Naive thymus-derived CD8-positive, alpha-beta T cell (primary cell): ENCODE measurements at regions of chr19 and their contacts with region 1.

Region 1: DNA sequence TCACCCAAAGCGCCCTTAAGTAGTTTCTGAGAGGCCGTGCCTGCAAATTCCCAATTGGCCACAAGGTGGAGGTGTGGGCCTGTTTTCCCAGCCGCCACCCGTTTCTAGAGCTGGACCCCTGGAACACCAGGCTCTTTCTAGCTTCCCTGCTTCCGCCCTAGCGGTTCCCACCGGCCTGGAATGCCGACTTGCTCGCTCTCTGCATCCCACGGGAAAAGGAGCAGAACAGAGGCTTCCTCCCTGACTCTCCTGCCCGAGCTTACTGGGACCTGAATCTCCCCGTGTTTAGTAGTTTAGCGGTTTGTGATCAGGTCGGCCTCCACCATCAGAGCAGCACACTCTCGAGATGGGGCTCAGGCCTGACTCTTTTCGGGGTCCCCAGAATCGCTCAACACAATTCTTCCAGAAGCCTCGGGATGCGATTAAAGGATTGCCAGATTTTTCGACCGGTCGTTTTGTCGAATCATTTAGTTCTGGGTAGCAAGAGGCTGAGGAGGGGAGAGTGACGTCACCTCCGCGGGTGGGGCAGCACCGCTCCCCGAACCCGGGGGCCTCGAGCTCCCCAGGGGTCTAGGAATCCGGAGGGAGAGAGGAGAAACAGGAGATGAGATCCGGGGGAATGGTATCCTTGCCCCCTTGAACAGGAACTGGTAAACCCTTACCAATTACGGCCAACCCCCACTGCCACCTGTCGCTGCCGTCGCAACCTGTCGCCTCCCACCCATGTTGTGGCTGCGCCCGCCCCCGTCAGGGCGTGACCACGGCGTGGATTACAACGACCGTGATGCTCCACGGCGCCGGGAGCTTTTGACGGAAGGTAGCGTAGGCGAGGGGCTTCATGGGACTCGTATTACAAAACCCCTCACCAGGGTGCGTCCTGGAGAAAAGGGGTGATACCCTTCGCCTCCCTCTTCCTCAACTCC is 8.0 kb downstream of the NAPSA start:
- DNase-seq: peak; percentile 71 to 94 (median 88)
- ATAC-seq: peak; percentile 87
- H3K4me3 Mint-ChIP-seq: peak overlapping the region; percentile 91 to 96 (median 91)
- H3K27ac Mint-ChIP-seq: peak overlapping the region; percentile 92 to 99 (median 98)
- H3K4me1 Mint-ChIP-seq: peaks cover 27 to 51% (median 46%) of the 10 kb centered on the region in 4 donors
- H3K27me3 Mint-ChIP-seq: peaks cover 0 to 2% (median 0%) of the 10 kb centered on the region in 5 donors

Region 2: DNA sequence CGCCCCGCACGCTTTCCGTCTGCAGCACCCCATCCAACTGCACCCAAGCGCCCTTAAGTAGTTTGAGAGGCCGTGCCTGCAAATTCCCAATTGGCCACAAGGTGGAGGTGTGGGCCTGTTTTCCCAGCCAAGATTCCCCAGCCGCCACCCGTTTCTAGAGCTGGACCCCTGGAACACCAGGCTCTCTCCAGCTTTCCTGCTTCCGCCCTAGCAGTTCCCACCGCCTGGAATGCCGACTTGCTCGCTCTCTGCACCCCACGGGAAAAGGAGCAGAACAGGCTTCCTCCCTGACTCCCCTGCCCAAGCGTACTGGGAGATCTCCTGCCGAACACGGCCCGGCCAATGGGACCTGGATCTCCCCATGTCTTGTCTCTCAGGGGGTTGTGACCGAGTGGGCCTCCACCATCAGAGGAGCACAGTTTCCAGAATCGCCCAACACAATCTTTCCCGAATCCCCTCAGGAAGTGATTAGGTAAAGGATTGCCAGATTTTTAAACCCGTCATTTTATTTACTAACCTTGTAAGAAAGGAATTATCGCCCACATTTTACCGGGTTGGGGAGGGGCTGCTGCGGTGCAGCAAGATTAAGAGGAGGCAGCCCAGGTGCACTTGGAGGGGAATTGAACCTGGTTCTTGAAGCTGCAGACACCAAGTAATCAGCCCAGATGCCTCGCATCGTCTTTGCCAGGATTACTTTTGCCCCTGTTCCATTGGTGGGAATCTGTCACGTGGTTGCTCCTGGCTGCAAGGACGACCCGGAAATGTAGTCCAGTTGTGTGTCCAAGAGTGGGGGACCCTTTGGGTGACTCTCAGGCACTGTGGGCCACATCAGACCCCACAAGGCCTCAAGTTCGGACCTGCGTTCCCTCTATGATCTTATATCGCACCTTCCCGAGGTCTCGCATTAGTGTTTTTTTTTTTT is 11.5 kb after region 1 on chr19:
- POLR2A ChIA-PET with region 1: interaction called, 43 read pairs
- DNase-seq: peak; percentile 62 to 89 (median 79)
- ATAC-seq: peak; percentile 71 to 82
- H3K4me3 Mint-ChIP-seq: peak overlapping the region; percentile 87 to 98 (median 94)
- H3K27ac Mint-ChIP-seq: peak overlapping the region; percentile 75 to 97 (median 93)
- H3K4me1 Mint-ChIP-seq: peaks cover 17 to 41% (median 38%) of the 10 kb centered on the region in 4 donors
- H3K27me3 Mint-ChIP-seq: peaks cover 0 to 2% (median 0%) of the 10 kb centered on the region in 5 donors

Region 3: GRCh38 chr19:50376166-50377050 is 19.0 kb after region 1 on chr19 and contains the start of gene NR1H2:
- POLR2A ChIA-PET with region 1: interaction called, 39 read pairs
- DNase-seq: peak; percentile 91 to 97 (median 95)
- ATAC-seq: peak; percentile 84 to 86
- H3K4me3 Mint-ChIP-seq: peak within 1 kb of the TSS; percentile 92 to 100 (median 98)
- H3K27ac Mint-ChIP-seq: peak within 1 kb of the TSS; percentile 98 to 100 (median 100)
- H3K4me1 Mint-ChIP-seq: peaks cover 19 to 45% (median 30%) of the 10 kb centered on the region in 4 donors
- H3K27me3 Mint-ChIP-seq: peaks cover 0 to 2% (median 0%) of the 10 kb centered on the region in 5 donors
- polyA plus RNA-seq, gene NR1H2: 69.6 to 100 (median 86.7) TPM

Region 4: DNA sequence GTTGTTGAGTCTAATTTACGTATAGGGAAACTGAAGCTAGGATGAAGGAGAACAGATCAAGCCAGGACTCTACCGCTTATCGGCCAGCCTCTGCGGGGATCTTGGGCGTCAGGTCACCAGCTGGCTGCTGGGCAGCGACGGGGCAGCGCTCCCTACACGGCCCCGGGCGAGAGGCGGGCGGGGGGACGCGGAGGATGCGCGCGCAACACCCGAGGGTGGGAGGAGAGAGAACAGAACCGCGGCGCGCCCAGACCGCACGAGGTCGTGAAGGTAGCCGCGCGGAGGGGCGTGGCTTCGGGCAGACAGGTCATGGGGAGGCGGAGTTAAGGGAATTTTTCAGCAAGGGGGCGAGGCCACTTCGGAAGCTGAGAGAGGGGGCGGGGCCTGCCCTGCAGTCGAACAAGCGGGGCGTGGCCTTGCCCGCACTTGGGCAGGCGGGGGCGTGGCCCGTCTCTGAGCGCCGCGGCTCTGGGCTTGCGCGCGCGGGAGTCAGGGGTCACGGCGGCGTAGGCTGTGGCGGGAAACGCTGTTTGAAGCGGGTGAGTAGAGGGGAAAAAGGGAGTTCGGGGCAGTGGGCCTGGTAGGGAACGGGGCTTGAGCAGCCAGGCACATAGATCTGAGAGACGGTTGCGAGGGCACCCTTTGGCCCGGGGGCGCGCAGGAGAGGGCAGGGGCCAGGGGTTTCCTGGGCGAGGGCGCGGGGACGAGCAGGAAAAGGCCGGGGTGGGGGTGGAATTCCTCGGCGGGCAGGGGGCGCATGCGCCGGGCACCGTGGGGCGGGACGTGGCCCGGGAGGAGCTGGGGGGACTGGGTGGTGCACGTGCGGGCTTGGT is 26.6 kb after region 1 on chr19 and contains the start of gene POLD1:
- POLR2A ChIA-PET with region 1: interaction called, 21 read pairs
- DNase-seq: peak; percentile 97 to 99 (median 99)
- ATAC-seq: peak; percentile 84 to 87
- H3K4me3 Mint-ChIP-seq: peak within 1 kb of the TSS; percentile 92 to 99 (median 96)
- H3K27ac Mint-ChIP-seq: peak within 1 kb of the TSS; percentile 88 to 98 (median 94)
- H3K4me1 Mint-ChIP-seq: peaks cover 35 to 52% (median 39%) of the 10 kb centered on the region in 4 donors
- H3K27me3 Mint-ChIP-seq: peaks cover 0 to 5% (median 0%) of the 10 kb centered on the region in 5 donors
- polyA plus RNA-seq, gene POLD1: 26.0 to 34.4 (median 33.8) TPM

Region 5: GRCh38 chr19:50449236-50449899 is 91.9 kb after region 1 on chr19:
- POLR2A ChIA-PET with region 1: no interaction called
- DNase-seq: no peak
- ATAC-seq: no peak
- H3K4me3 Mint-ChIP-seq: no peak overlapping the region
- H3K27ac Mint-ChIP-seq: no peak overlapping the region
- H3K4me1 Mint-ChIP-seq: peaks cover 0 to 3% (median 0%) of the 10 kb centered on the region in 4 donors
- H3K27me3 Mint-ChIP-seq: peaks cover 2 to 35% (median 12%) of the 10 kb centered on the region in 5 donors

Region 6: DNA sequence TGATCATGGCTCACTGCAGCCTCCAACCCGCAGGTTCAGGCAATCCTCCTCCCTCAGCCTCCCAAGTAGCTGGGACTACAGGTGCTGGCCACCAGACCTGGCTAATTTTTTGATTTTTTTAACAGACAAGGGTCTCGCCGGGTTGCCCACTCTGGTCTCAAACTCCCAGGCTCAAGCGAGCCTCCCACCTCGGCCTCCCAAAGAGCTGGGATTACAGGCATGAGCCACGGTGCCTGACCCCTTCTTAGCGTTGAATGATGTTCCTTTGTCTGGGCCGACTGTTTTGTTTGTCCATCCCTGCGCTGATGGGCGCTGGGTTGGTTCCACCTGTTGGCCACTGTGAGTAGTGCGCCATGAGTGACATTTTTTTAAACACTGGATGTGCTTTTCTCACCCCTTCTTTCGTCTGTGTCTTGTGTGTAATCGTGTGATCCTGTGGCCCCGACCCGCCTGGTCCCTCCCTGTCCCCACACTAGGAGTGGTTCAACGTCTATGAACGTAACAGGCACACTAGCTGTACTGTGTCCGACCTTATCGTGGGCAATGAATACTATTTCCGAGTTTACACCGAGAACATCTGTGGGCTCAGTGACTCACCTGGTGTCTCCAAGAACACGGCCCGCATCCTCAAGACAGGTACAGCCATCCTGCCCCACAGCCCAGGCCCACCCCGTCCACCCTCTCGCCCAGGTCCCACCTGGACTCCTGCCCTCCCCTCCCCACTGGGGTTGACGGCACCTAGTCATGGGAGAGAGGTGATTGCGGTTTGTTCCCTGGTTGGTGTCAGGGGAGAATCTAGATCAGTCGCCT is 103.8 kb after region 1 on chr19:
- POLR2A ChIA-PET with region 1: interaction called, 15 read pairs
- DNase-seq: peak; percentile 26 to 74 (median 50)
- ATAC-seq: peak; percentile 74 to 95
- H3K4me3 Mint-ChIP-seq: peak overlapping the region in 1 of 10 donors; percentile 16
- H3K27ac Mint-ChIP-seq: peak overlapping the region in 1 of 10 donors; percentile 1
- H3K4me1 Mint-ChIP-seq: peaks cover 0 to 12% (median 5%) of the 10 kb centered on the region in 4 donors
- H3K27me3 Mint-ChIP-seq: peaks cover 9 to 45% (median 26%) of the 10 kb centered on the region in 5 donors

Region 7: GRCh38 chr19:50724522-50725217 is 367.2 kb after region 1 on chr19:
- POLR2A ChIA-PET with region 1: interaction called, 12 read pairs
- DNase-seq: peak; percentile 91 to 100 (median 99)
- ATAC-seq: peak; percentile 75 to 80
- H3K4me3 Mint-ChIP-seq: peak overlapping the region; percentile 87 to 94 (median 90)
- H3K27ac Mint-ChIP-seq: peak overlapping the region; percentile 35 to 97 (median 93)
- H3K4me1 Mint-ChIP-seq: peaks cover 33 to 74% (median 61%) of the 10 kb centered on the region in 4 donors
- H3K27me3 Mint-ChIP-seq: peaks cover 4 to 25% (median 10%) of the 10 kb centered on the region in 5 donors

Region 8: DNA sequence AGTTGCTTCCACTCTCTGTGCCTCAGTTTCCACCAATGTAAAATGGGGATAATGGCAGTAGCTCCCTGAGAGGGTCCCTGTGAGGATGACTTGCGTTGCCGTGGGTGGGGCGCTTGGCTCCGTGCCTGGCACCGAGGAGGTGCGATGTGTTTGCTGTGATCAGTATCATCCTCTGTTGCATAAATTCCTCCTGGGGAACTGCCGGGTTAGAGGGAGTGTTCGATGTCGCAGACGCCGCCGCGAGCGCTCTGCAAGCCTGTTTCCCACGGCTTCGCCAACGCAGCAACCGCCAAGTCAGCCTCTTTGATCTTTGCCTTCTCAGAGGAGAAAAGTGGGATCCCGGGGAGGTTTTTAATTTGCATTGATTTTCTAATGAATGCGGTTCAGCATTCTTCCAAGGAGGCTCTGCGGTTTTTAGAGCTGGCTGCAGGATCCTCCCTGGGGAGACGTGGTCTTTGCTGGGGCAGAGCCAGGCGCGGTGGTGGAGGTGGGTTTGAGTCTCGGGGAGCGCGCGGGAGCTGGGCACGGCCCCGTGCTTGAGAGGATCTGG is 420.4 kb after region 1 on chr19:
- POLR2A ChIA-PET with region 1: interaction called, 10 read pairs
- DNase-seq: peak in 2 of 10 donors; percentile 7 to 21
- ATAC-seq: peak in 1 of 2 donors; percentile 57
- H3K4me3 Mint-ChIP-seq: peak overlapping the region in 2 of 10 donors; percentile 20 to 36
- H3K27ac Mint-ChIP-seq: no peak overlapping the region
- H3K4me1 Mint-ChIP-seq: peaks cover 7 to 14% (median 13%) of the 10 kb centered on the region in 4 donors
- H3K27me3 Mint-ChIP-seq: peaks cover 44 to 85% (median 59%) of the 10 kb centered on the region in 5 donors